Left lung (tissue), 14 donors: ENCODE measurements at regions of chr17 and their contacts with region 1.

Region 1: GRCh38 chr17:68972119-68972704 is 17.0 kb upstream of the ABCA8 start:
- DNase-seq: peak in 2 of 4 donors; percentile 36 to 46
- ATAC-seq: peak; percentile 79
- H3K4me3 ChIP-seq: no peak overlapping the region
- H3K27ac ChIP-seq: no peak overlapping the region
- H3K4me1 ChIP-seq: no peaks in the 10 kb centered on the region
- H3K27me3 ChIP-seq: no peaks in the 10 kb centered on the region
- CTCF ChIP-seq: peak; percentile 31 to 50

Region 2: DNA sequence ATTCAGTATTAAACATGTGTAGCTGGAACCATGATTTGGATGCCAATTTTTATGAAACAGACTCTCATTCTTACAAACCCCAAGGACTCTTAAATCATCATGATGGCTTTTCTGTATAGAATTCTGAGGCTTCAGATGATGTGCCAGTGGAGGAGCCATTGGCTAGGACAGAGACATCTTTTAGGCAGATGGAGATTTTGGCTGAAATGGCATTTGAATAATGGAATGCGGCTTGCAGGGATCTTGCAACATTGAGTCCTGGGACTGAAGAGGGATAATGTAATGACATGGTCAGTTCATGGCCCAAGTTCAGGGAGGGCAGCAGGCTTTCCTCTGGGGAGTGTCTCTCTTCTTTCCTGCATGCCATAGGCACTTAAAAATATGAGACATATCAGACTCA is 189.4 kb before region 1 on chr17:
- intact Hi-C with region 1: loop called (anchors 10 kb)
- DNase-seq: no peak
- ATAC-seq: no peak
- H3K4me3 ChIP-seq: no peak overlapping the region
- H3K27ac ChIP-seq: no peak overlapping the region
- H3K4me1 ChIP-seq: peaks cover 0 to 6% of the 10 kb centered on the region in 2 donors
- H3K27me3 ChIP-seq: no peaks in the 10 kb centered on the region
- CTCF ChIP-seq: no peak

Region 3: GRCh38 chr17:68832109-68832802 is 140.0 kb before region 1 on chr17:
- intact Hi-C with region 1: no loop called
- DNase-seq: peak in 3 of 4 donors; percentile 52 to 70 (median 53)
- ATAC-seq: peak; percentile 61
- H3K4me3 ChIP-seq: no peak overlapping the region
- H3K27ac ChIP-seq: peak overlapping the region in 1 of 2 donors; percentile 26
- H3K4me1 ChIP-seq: no peaks in the 10 kb centered on the region
- H3K27me3 ChIP-seq: no peaks in the 10 kb centered on the region
- CTCF ChIP-seq: no peak